ENCODE measurements at regions of chr4 and their contacts with region 1.

Region 1: DNA sequence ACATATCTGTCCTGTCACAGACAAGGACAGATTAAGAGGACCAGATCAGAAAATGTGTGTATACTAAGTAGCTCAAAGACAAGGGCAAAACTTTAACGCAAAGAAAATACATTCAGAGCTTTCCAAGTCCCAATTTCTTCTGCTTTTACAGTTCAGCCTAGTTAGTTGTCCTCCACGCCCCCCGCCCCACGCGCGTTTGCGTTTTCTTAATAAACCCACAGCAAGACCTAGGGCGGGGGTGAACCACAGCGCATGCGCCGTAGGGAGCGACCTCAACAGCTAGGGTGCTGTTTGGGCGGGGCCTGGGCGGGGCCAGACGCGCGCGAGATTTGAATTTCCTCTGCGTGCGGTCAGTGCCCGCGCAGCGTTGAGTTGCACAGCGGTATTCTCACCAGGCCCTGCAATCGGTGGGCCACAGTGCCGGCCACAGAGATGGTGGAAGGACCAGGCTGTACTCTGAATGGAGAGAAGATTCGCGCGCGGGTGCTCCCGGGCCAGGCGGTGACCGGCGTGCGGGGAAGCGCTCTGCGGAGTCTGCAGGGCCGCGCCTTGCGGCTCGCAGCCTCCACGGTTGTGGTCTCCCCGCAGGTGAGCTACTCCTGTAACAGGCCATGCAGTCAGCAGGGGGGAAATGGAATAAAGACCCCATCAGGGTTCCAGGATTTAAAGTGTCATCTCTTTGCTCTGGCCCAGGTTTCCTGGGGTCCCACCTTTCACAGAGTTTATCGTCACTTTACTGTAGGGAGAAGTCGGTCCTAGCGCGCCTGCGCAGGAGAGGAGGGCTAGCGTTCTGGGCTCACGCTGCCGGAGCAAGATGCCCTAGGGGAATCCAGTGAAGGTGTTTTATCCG is at the start of gene NEIL3:
- DNase-seq: peak; percentile 94
- H3K4me3 ChIP-seq: peak within 1 kb of the TSS; percentile 70
- H3K27ac ChIP-seq: peak within 1 kb of the TSS; percentile 71
- H3K4me1 ChIP-seq: peaks cover 13% of the 10 kb centered on the region
- H3K27me3 ChIP-seq: no peaks in the 10 kb centered on the region
- CTCF ChIP-seq: no peak
- total RNA-seq, gene NEIL3: 21.9 and 24.0 TPM in 2 replicates

Region 2: GRCh38 chr4:177356206-177356605 is 46.5 kb after region 1 on chr4:
- CTCF ChIA-PET with region 1: no interaction called
- POLR2A ChIA-PET with region 1: no interaction called
- intact Hi-C with region 1: no loop called
- DNase-seq: no peak
- H3K4me3 ChIP-seq: no peak overlapping the region
- H3K27ac ChIP-seq: no peak overlapping the region
- H3K4me1 ChIP-seq: no peaks in the 10 kb centered on the region
- H3K27me3 ChIP-seq: no peaks in the 10 kb centered on the region
- CTCF ChIP-seq: no peak

Region 3: GRCh38 chr4:177410571-177410970 is 100.8 kb after region 1 on chr4:
- CTCF ChIA-PET with region 1: no interaction called
- POLR2A ChIA-PET with region 1: interaction called, 13 read pairs
- intact Hi-C with region 1: no loop called
- DNase-seq: no peak
- H3K4me3 ChIP-seq: no peak overlapping the region
- H3K27ac ChIP-seq: no peak overlapping the region
- H3K4me1 ChIP-seq: no peaks in the 10 kb centered on the region
- H3K27me3 ChIP-seq: no peaks in the 10 kb centered on the region
- CTCF ChIP-seq: no peak

Region 4: GRCh38 chr4:177778623-177779022 is 468.9 kb after region 1 on chr4:
- CTCF ChIA-PET with region 1: no interaction called
- POLR2A ChIA-PET with region 1: no interaction called
- intact Hi-C with region 1: no loop called
- DNase-seq: no peak
- H3K4me3 ChIP-seq: no peak overlapping the region
- H3K27ac ChIP-seq: no peak overlapping the region
- H3K4me1 ChIP-seq: no peaks in the 10 kb centered on the region
- H3K27me3 ChIP-seq: no peaks in the 10 kb centered on the region
- CTCF ChIP-seq: no peak

Measured in A673 (cell line).